A549 (cell line): ENCODE measurements at regions of chr18 and their contacts with region 1.

Region 1: GRCh38 chr18:3151399-3152264 is 68.1 kb downstream of the MYOM1 start:
- DNase-seq: peak; percentile 17 to 30
- ATAC-seq: no peak
- H3K4me3 ChIP-seq: no peak overlapping the region
- H3K27ac ChIP-seq: peak overlapping the region in 1 of 2 experiments; percentile 30; a peak in 1 of 6 replicates
- H3K4me1 ChIP-seq: peaks cover 10% of the 10 kb centered on the region; the same call in 1 of the 3 replicates
- CTCF ChIP-seq: peak; percentile 67
- EP300 ChIP-seq: no peak
- POLR2A ChIP-seq: no peak
- RAD21 ChIP-seq: peak; percentile 61 to 70

Region 2: DNA sequence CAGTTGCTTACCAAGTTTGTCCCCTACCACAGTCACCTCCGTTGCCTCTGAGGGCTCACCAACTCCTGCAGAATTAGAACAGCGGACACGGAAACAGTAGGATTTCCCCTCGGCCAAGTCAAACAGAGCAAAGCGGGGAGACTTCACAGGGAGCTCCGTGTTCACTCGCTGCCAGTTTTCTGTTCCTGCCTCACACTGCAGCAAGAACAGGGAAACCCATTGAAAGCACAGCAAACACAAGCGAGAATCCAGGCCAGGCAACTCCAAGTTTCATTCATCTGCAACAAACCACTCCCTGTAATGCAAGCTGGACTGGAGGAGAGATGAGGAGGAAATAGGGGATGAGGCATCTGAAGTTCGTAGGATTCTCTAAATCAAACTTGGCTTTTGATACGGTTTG is 16.1 kb before region 1 on chr18:
- CTCF ChIA-PET with region 1: interaction called, 13 read pairs
- POLR2A ChIA-PET with region 1: no interaction called
- DNase-seq: no peak
- ATAC-seq: no peak
- H3K4me3 ChIP-seq: no peak overlapping the region
- H3K27ac ChIP-seq: no peak overlapping the region
- H3K4me1 ChIP-seq: no peaks in the 10 kb centered on the region
- CTCF ChIP-seq: no peak
- EP300 ChIP-seq: no peak
- POLR2A ChIP-seq: no peak
- RAD21 ChIP-seq: no peak